ENCODE measurements at regions of chr9 and their contacts with region 1.

Region 1: GRCh38 chr9:34603610-34604231 is 8.2 kb downstream of the RPP25L start:
- DNase-seq: peak; percentile 85
- ATAC-seq: peak; percentile 92
- H3K4me3 ChIP-seq: no peak overlapping the region
- H3K27ac ChIP-seq: no peak overlapping the region
- H3K4me1 ChIP-seq: no peaks in the 10 kb centered on the region
- H3K27me3 ChIP-seq: no peaks in the 10 kb centered on the region
- CTCF ChIP-seq: peak; percentile 97

Region 2: DNA sequence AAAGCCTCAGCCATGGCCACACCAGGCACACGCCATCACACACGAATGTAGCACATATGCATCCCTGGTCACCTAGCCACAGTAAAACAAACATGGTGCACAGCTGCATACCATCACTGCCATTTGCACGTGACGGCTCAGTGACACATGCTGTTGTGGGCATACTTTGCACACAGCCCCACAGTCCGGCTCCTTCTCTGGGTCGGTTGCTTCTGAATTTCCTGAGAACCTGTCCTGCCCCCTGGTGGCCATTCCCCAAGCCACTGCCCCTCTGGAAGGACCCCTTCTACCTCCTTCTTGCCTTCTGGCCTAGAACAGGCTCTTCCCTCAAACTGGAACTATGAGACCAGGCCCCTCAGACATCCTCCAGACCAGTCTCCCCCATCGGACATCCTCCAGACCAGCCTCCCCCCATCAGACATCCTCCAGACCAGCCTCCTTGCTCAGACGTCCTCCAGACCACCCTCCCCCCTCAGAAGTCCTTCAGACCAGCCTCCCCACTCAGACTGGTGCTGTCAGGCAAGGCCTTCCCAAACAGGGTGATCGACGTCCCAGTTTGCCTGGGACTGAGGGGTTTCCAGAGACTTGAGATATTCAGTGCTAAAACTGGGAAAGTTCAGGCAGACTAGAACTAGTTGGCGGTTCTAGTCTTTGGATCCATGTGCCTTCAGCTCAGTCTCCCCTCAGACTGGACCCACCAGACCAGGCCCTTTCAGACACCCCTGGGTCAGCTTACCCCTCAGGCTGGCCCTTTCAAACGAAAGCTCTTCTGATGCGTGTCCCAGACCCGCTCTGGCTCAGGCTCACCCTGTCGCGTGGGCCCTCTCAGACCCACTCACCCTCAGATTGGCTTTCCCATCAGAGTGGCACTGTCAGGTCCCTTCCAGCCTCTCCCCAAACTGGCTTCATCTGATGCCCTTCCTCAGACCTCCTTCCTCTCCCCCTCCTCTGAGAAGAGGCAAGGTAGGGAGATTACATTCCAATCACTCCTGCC is 56.6 kb before region 1 on chr9:
- intact Hi-C with region 1: loop called (anchors 10 kb)
- DNase-seq: peak; percentile 77
- ATAC-seq: peak; percentile 74
- H3K4me3 ChIP-seq: no peak overlapping the region
- H3K27ac ChIP-seq: no peak overlapping the region
- H3K4me1 ChIP-seq: no peaks in the 10 kb centered on the region
- H3K27me3 ChIP-seq: no peaks in the 10 kb centered on the region
- CTCF ChIP-seq: peak; percentile 62

Region 3: GRCh38 chr9:34825775-34826174 is 222.1 kb after region 1 on chr9:
- intact Hi-C with region 1: no loop called
- DNase-seq: no peak
- ATAC-seq: no peak
- H3K4me3 ChIP-seq: no peak overlapping the region
- H3K27ac ChIP-seq: no peak overlapping the region
- H3K4me1 ChIP-seq: no peaks in the 10 kb centered on the region
- H3K27me3 ChIP-seq: no peaks in the 10 kb centered on the region
- CTCF ChIP-seq: no peak